ENCODE measurements at regions of chrX and their contacts with region 1.

Region 1: GRCh38 chrX:47193475-47194193 is at the start of gene UBA1:
- DNase-seq: peak; percentile 95
- ATAC-seq: peak; percentile 79
- H3K4me3 Mint-ChIP-seq: peak within 1 kb of the TSS; percentile 94
- H3K27ac Mint-ChIP-seq: peak within 1 kb of the TSS; percentile 98
- H3K4me1 Mint-ChIP-seq: peaks cover 44% of the 10 kb centered on the region
- H3K27me3 Mint-ChIP-seq: no peaks in the 10 kb centered on the region
- total RNA-seq, gene UBA1: 186 to 189 TPM

Region 2: DNA sequence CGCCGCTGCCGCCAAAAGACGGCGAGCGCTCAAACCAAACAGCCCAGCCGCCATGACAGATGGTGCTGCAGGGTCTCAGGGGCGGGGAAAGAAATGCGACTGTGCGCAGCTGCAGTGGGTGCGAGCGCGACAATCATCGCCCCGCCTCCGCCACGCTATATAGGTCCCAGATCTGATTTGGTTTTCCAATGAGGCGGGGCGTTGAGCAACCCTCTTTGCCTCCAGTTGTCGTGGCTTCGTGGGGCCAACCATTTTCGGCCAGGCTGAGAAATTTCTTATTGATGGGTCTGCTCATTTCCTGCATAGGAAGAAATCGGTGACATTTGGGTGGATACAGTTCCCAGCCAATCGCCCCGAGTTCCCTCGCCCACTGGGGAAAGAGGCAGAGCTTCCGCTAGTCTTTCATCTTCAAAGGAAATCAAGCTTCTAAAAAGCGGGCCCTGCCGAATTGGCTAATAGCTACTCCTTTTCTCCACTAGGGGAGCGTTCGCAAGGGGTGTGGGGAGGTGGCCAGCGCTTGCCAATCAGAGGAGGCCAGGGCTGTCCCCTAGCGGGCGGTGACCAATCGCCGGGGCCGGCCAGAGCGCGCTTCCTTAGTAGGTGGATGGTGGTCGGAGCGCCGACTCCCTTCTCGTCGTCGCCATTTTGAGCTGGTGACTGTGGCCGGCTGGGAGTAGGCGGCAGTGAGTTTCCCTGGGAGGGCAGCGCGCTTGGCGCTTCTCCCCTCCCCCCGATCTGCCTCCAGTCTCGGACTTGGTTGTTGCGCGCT is 48.8 kb before region 1 on chrX and contains the starts of genes NDUFB11 and RBM10:
- CTCF ChIA-PET with region 1: interaction called, 8 read pairs
- POLR2A ChIA-PET with region 1: interaction called, 15 read pairs
- DNase-seq: peak; percentile 94
- ATAC-seq: peak; percentile 97
- H3K4me3 Mint-ChIP-seq: peak within 1 kb of the TSS; percentile 98
- H3K27ac Mint-ChIP-seq: peak within 1 kb of the TSS; percentile 99
- H3K4me1 Mint-ChIP-seq: peaks cover 30% of the 10 kb centered on the region
- H3K27me3 Mint-ChIP-seq: no peaks in the 10 kb centered on the region
- total RNA-seq, gene NDUFB11: 92.9 to 103 TPM
- total RNA-seq, gene RBM10: 62.2 to 64.1 TPM

Region 3: GRCh38 chrX:47384502-47384901 is 190.9 kb after region 1 on chrX:
- CTCF ChIA-PET with region 1: interaction called, 15 read pairs
- POLR2A ChIA-PET with region 1: interaction called, 6 read pairs
- DNase-seq: peak; percentile 76
- ATAC-seq: peak; percentile 58
- H3K4me3 Mint-ChIP-seq: no peak overlapping the region
- H3K27ac Mint-ChIP-seq: peak overlapping the region; percentile 11
- H3K4me1 Mint-ChIP-seq: peaks cover 26% of the 10 kb centered on the region
- H3K27me3 Mint-ChIP-seq: no peaks in the 10 kb centered on the region

Region 4: GRCh38 chrX:47523297-47523696 is 329.7 kb after region 1 on chrX:
- CTCF ChIA-PET with region 1: interaction called, 11 read pairs
- POLR2A ChIA-PET with region 1: no interaction called
- DNase-seq: peak; percentile 81
- ATAC-seq: peak; percentile 99
- H3K4me3 Mint-ChIP-seq: peak overlapping the region; percentile 63
- H3K27ac Mint-ChIP-seq: peak overlapping the region; percentile 11
- H3K4me1 Mint-ChIP-seq: peaks cover 5% of the 10 kb centered on the region
- H3K27me3 Mint-ChIP-seq: no peaks in the 10 kb centered on the region

Measured in activated CD8-positive, alpha-beta T cell treated with anti-CD3 and anti-CD28 coated beads, Interleukin-2, amount 10 ng/mL, durations not matched to agents 7 days and 5 days (primary cell).